Activated CD4-positive, alpha-beta T cell treated with anti-CD3 and anti-CD28 coated beads for 36 hours (primary cell): ENCODE measurements at regions of chr13 and their contacts with region 1.

Region 1: DNA sequence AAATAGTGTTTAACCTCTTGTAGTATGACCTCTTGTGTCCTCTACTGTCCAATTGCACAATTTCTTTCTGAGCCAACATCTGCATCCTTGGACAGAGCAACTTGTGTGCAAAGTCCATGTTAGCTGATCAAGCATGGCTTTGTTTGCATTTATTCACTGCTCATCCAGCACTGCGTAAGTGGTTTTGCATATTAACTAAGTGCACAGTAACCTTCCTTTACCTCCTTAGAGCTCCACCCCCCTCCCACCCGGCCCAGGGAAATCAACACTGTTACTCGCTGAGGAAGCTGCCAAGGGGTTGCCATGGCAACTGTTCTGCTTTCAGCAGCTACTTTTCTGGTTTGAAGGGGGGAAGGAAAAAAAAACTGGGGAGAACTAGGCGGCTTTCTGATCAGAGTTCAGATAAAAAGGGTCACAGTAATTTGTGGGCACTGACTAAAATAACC is 153.5 kb upstream of the KLF12 start:
- DNase-seq: peak; percentile 88
- ATAC-seq: peak; percentile 60
- H3K4me3 Mint-ChIP-seq: peak overlapping the region; percentile 64
- H3K27ac Mint-ChIP-seq: peak overlapping the region; percentile 68
- H3K4me1 Mint-ChIP-seq: peaks cover 60% of the 10 kb centered on the region
- H3K27me3 Mint-ChIP-seq: no peaks in the 10 kb centered on the region

Region 2: DNA sequence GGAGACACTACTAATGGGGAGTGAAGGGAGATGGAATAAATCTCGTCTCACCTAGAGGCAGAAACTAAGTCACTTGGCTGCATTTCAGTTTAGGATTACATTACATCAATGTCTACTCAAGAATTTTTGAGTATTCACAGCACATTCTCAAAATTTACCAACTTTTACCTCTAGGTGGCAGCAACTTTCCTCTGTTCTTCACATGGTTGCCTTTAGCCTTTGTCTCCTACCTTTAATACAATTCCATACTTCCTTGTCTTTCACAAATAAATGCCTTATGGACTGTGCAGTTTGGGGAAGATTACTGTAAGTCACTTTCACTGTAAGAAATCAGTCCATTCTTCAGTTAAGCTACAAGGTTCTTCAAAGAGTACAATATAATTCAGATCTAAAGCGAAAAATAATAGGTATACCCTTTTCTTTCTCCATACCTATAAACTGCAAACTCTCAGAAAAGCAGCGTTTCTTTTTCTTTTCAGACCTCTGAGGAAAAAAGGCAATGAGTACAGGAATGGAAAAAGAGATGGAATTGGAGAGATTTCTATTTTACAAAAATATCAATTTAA is 532.9 kb before region 1 on chr13:
- CTCF ChIA-PET with region 1: no interaction called
- POLR2A ChIA-PET with region 1: no interaction called
- intact Hi-C with region 1: loop called (anchors 1 kb)
- DNase-seq: peak; percentile 10
- ATAC-seq: peak; percentile 47
- H3K4me3 Mint-ChIP-seq: no peak overlapping the region
- H3K27ac Mint-ChIP-seq: no peak overlapping the region
- H3K4me1 Mint-ChIP-seq: peaks cover 28% of the 10 kb centered on the region
- H3K27me3 Mint-ChIP-seq: no peaks in the 10 kb centered on the region

Region 3: DNA sequence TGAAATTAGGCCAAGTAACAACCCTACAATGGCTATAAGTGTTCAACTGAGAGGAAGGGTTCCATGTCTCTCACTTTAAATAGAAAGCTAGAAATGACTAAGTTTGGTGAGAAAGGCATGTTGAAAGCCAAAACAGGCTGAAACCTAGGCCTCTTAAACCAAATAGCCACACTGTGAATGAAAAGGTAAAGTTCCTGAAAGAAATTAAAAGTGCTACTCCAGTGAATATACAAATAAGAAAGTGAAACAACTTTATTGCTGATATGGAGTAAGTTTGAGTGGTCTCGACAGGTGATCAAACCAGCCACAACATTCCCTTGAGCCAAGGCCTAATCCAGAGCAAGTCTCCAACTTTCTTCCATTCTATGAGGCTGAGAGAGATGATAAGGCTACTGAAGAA is 363.1 kb before region 1 on chr13:
- CTCF ChIA-PET with region 1: no interaction called
- POLR2A ChIA-PET with region 1: no interaction called
- intact Hi-C with region 1: loop called in 1 of 2 experiments (anchors 1 kb)
- DNase-seq: no peak
- ATAC-seq: peak; percentile 72
- H3K4me3 Mint-ChIP-seq: no peak overlapping the region
- H3K27ac Mint-ChIP-seq: peak overlapping the region; percentile 86
- H3K4me1 Mint-ChIP-seq: peaks cover 76% of the 10 kb centered on the region
- H3K27me3 Mint-ChIP-seq: no peaks in the 10 kb centered on the region

Region 4: GRCh38 chr13:73998631-73999030 is 289.1 kb before region 1 on chr13:
- CTCF ChIA-PET with region 1: no interaction called
- POLR2A ChIA-PET with region 1: no interaction called
- intact Hi-C with region 1: loop called in 1 of 2 experiments (anchors 5 kb)
- DNase-seq: no peak
- ATAC-seq: peak; percentile 95
- H3K4me3 Mint-ChIP-seq: no peak overlapping the region
- H3K27ac Mint-ChIP-seq: peak overlapping the region; percentile 55
- H3K4me1 Mint-ChIP-seq: peaks cover 49% of the 10 kb centered on the region
- H3K27me3 Mint-ChIP-seq: no peaks in the 10 kb centered on the region

Region 5: GRCh38 chr13:74026753-74027152 is 261.0 kb before region 1 on chr13:
- CTCF ChIA-PET with region 1: no interaction called
- POLR2A ChIA-PET with region 1: no interaction called
- intact Hi-C with region 1: no loop called
- DNase-seq: peak; percentile 80
- ATAC-seq: peak; percentile 97
- H3K4me3 Mint-ChIP-seq: peak overlapping the region; percentile 74
- H3K27ac Mint-ChIP-seq: peak overlapping the region; percentile 97
- H3K4me1 Mint-ChIP-seq: peaks cover 76% of the 10 kb centered on the region
- H3K27me3 Mint-ChIP-seq: no peaks in the 10 kb centered on the region

Region 6: GRCh38 chr13:74128156-74128767 is 159.5 kb before region 1 on chr13:
- CTCF ChIA-PET with region 1: interaction called, 14 read pairs
- POLR2A ChIA-PET with region 1: no interaction called
- intact Hi-C with region 1: loop called in 1 of 2 experiments (anchors 1 kb)
- DNase-seq: peak; percentile 46
- ATAC-seq: peak; percentile 42
- H3K4me3 Mint-ChIP-seq: peak overlapping the region; percentile 40
- H3K27ac Mint-ChIP-seq: peak overlapping the region; percentile 80
- H3K4me1 Mint-ChIP-seq: peaks cover 69% of the 10 kb centered on the region
- H3K27me3 Mint-ChIP-seq: no peaks in the 10 kb centered on the region

Region 7: GRCh38 chr13:74243637-74244526 is 43.9 kb before region 1 on chr13:
- CTCF ChIA-PET with region 1: interaction called, 4 read pairs
- POLR2A ChIA-PET with region 1: no interaction called
- intact Hi-C with region 1: loop called (anchors 2 kb)
- DNase-seq: peak; percentile 20
- ATAC-seq: peak; percentile 81
- H3K4me3 Mint-ChIP-seq: peak overlapping the region; percentile 27
- H3K27ac Mint-ChIP-seq: peak overlapping the region; percentile 76
- H3K4me1 Mint-ChIP-seq: peaks cover 71% of the 10 kb centered on the region
- H3K27me3 Mint-ChIP-seq: no peaks in the 10 kb centered on the region

Region 8: DNA sequence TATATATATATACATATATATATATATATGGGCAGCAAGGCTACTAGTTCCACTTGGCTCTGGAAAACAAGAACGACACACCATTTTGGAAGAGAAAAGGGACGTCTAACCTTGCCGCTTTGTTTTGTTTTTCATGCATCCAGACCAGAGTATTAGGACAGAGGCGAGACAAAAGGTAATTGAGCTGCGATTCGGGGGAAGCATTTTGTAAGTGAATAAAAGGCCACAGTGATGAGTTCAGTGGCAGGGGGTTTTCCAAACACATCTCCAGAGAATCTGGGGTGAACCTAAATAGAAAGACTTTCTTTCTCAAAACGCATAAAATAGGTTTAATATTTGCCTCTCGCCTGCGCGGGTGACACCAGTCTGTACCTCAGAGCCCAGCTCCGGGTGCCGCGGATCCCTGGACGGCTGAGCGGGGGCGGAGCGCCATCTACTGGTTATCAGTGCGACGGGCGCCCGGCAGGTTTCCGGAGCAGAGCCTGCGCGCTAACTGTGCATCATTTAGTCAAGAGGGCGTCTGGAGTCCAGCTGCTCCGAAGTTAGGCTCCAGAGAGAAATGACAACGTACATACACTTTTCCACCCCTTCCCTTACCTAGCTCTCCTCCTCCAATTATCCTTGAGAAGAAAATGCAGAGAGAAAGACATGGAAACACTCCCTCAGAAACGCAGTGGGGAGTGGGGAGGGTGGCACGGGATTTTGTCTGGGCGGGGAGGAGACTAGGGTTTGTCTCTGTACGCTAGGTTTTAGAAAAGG is 931.9 kb after region 1 on chr13:
- CTCF ChIA-PET with region 1: interaction called, 4 read pairs
- POLR2A ChIA-PET with region 1: no interaction called
- intact Hi-C with region 1: loop called in 1 of 2 experiments (anchors 5 kb)
- DNase-seq: peak; percentile 92
- ATAC-seq: peak; percentile 99
- H3K4me3 Mint-ChIP-seq: peak overlapping the region; percentile 44
- H3K27ac Mint-ChIP-seq: no peak overlapping the region
- H3K4me1 Mint-ChIP-seq: peaks cover 5% of the 10 kb centered on the region
- H3K27me3 Mint-ChIP-seq: peaks cover 21% of the 10 kb centered on the region